Head of caudate nucleus (tissue), 42 donors: ENCODE measurements at regions of chr10 and their contacts with region 1.

Region 1: DNA sequence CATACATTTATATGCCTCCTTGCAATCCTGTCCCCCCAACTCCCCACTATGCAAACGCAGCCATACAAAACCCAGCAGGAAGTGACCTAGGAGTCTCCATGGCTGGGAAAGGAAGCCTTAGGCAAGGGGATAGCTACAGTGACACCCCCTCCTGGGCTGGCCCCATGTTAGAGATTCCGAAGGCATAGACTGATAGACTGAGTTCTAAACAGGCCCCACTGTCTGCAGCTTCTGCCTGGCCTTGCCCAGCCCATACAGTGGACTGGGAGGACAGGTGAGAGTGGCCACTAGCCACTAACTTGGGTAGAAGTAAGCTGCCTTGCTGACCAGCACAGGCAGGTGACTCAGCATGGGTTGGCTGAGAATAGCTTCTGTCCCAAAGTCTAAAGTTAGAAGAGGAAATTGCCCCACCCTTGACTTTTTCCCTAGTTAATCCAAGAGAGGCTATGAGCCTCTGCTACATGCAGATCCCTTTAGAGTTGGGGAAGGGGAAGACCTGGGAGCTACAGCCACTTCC is 106.3 kb downstream of the C10orf105 start:
- DNase-seq: no peak

Region 2: DNA sequence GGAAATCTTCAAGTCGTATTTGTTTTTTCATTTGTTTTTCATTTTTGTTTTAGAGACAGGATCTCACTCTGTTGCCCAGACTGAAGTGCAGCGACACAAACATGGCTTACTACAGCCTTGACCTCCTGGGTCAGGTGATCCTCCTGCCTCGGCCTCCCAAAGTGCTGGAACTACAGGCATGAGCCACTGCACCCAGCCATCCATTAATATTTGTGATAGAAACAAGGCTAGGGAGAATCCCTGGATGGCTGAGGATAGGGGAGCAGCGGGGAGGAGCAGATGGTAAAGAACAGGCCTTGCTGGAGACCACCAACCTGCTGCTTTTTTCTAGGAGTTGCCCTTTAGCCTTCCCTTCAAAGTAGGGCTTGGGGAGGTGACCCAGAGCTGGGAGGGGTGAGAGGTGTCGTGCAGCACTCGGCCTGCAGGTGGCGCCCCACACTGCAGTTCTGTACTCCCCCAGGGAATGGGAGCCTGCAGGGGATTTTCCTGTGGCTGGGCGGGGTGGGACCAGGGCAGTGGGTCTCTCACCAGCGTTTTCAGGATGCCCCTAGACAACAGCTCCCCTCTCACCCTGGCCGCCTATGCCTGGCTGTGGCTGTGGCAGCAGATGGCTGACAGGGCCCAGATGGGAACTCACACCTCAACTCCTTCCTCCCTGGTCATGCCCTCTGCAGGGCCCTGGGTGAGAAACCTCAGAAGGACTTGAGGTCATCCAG is 229.2 kb before region 1 on chr10:
- intact Hi-C with region 1: loop called (anchors 5 kb)
- DNase-seq: peak; percentile 68 to 96 (median 88)